AG04450 (cell line): ENCODE measurements at regions of chr6 and their contacts with region 1.

Region 1: DNA sequence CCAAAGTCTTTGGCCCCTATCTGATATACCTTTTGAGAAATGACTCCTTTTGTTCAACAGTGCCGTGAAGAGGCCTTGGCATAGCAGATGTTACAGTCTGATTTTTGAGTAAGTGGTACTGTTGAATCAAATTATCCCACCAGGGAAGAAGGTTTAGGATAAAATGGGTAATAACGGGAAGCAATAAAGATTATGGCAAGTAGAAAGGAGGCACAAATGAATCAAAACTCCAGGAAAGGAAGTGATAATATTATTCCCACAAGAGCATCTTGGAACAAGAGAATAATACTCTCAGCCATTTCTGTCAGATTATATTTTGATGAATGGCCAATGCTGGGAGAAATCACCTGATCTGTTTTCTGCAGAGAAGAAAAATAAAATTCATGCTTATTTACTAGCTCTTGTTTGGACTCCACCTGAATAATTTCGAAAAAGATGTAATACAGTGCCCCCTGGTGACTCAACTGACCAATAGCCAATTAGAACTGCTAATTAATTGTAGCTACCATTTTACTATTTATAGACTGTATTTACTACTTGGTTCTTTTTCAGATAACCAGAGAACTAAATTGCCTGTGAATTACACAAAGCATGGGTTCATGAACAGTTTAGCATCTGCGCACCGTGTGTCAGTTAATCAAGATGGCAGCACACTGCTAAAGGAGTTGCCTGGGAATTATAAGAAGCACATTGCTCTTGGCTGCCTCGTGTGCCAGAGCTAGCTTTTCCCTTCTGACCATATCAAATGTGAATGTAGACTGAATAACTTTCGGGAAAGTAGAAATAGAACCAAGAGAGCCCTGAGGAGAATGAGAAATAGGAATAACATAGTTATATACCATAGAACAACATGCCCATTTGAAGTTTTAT is 78.5 kb upstream of the TRDN start:
- DNase-seq: no peak
- H3K4me3 ChIP-seq: no peak overlapping the region
- H3K27ac ChIP-seq: no peak overlapping the region
- H3K27me3 ChIP-seq: no peaks in the 10 kb centered on the region
- CTCF ChIP-seq: peak; percentile 33

Region 2: DNA sequence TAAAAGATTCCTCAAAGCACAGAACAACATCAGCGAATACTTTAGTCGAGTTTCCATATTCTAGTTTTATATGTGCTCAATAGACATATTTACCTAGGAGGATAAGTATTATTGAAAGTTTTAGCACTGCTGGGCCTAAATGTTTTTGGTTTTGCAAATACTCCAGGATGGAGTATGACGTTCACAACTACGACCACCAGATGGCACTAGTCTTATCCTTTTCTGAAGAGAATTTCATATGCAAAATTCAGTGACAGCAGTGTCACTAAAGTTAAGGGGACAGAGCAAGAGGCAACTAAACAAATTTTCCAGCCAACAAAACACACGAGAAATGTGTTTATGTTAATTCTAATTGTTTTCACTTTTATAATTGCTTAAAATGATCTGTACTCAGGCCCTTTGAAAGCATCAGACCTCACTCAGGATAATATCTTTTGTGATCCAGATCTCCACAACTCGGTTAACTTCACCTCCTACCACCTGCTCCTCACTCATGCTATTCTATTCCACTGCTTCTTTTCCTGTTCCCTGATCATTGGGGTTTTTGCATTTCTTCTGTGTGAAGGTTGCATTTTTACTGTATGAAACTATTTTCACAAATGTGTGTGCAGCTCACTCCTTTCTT is 299.3 kb before region 1 on chr6:
- CTCF ChIA-PET with region 1: interaction called, 10 read pairs
- POLR2A ChIA-PET with region 1: no interaction called
- DNase-seq: peak; percentile 3
- H3K4me3 ChIP-seq: no peak overlapping the region
- H3K27ac ChIP-seq: no peak overlapping the region
- H3K27me3 ChIP-seq: no peaks in the 10 kb centered on the region
- CTCF ChIP-seq: peak; percentile 64